ENCODE measurements at regions of chr22 and their contacts with region 1.

Region 1: DNA sequence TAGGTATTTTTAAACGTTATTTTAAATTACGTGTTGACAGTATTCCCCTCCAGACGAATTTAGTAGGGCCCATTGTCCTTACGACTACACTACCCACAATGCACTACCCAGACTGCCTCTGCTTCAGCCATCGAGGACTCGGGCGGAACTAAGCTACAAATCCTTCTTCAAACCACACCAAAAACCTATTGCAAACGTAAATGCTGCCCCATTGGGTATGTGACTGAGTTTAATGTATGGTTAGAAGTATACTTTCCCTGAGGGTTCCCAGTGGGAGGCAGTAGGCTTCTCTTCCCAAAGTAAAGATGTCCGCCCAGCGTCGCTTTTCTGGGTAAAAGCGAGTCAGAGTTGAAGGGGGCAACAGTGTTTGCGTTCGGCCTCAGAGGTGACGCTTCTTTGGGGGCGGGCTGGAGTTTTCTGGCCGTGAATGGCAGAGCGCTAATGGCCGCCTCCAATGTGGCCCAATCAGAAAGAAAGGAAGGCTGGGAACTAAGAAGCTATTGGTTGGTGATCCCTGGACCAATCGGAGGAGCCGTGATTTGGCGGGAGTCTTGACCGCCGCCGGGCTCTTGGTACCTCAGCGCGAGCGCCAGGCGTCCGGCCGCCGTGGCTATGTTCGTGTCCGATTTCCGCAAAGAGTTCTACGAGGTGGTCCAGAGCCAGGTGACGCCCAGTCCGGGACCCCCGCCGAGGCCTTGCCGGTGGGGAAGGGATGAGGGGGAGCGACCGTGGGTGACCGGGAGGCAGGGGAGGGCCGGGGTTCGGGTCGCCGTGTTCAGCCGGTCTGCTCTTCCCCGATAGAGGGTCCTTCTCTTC is at the start of gene CDC45:
- DNase-seq: peak; percentile 98
- H3K4me3 Mint-ChIP-seq: peak within 1 kb of the TSS; percentile 99
- H3K27ac Mint-ChIP-seq: peak within 1 kb of the TSS; percentile 96
- H3K4me1 Mint-ChIP-seq: peaks cover 28% of the 10 kb centered on the region
- H3K27me3 Mint-ChIP-seq: no peaks in the 10 kb centered on the region
- total RNA-seq, gene CDC45: 86.3 to 91.7 TPM

Region 2: GRCh38 chr22:19122143-19122751 is 357.3 kb before region 1 on chr22 and contains the start of gene DGCR2:
- CTCF ChIA-PET with region 1: no interaction called
- intact Hi-C with region 1: loop called (anchors 5 kb)
- DNase-seq: peak; percentile 98
- H3K4me3 Mint-ChIP-seq: peak within 1 kb of the TSS; percentile 84
- H3K27ac Mint-ChIP-seq: peak within 1 kb of the TSS; percentile 66
- H3K4me1 Mint-ChIP-seq: peaks cover 47% of the 10 kb centered on the region
- H3K27me3 Mint-ChIP-seq: no peaks in the 10 kb centered on the region
- total RNA-seq, gene DGCR2: 15.4 to 16.4 TPM

Region 3: GRCh38 chr22:19178656-19179496 is 300.7 kb before region 1 on chr22 and contains the start of gene SLC25A1:
- CTCF ChIA-PET with region 1: interaction called, 4 read pairs
- intact Hi-C with region 1: loop called (anchors 1 kb)
- DNase-seq: peak; percentile 85
- H3K4me3 Mint-ChIP-seq: peak within 1 kb of the TSS; percentile 75
- H3K27ac Mint-ChIP-seq: peak within 1 kb of the TSS; percentile 53
- H3K4me1 Mint-ChIP-seq: peaks cover 31% of the 10 kb centered on the region
- H3K27me3 Mint-ChIP-seq: no peaks in the 10 kb centered on the region
- total RNA-seq, gene SLC25A1: 54.0 to 58.4 TPM

Region 4: DNA sequence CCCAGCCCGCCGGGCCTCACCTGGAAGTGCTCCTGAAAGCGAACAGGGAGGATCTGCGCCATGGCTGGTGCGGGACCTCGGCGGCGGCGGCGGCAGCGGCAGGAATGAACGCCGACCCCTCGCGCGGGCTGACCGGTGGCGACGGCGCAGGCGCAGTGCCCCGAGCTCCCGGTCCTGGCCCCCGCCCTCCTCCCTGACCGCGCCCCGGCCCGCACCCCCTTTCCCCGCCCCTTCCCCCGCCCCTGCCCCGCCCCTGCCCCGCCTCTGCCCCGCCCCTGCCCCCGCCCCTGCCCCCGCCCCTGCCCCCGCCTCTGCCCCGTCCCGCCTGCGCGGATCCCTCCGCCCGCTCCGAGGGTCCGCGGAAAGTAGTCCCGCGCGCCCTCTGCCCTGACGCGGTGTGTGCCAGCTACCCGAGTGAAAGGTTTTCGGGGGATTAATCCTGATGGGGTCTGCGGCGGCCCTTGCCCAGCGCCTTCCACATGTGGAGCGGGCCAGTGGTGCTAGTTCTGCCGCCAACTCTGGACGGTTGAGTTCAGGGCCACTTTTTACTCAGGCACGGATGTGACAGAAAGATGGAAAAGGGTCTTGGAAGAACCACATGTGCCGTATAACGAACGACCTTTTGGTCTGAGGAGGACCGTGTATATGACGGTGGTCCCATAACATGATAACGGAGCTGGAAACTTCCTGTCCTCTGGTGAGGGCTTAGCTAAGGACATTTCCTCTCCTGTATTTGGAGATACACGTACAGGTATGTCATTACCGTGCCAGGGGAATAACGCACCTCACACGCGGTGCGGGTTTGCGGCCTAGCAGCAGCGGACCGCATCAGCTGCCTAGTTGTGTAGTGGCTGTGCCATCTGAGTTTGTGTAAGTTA is 187.7 kb before region 1 on chr22 and contains the start of gene CLTCL1:
- CTCF ChIA-PET with region 1: no interaction called
- intact Hi-C with region 1: loop called (anchors 1 kb)
- DNase-seq: peak; percentile 69
- H3K4me3 Mint-ChIP-seq: peak within 1 kb of the TSS; percentile 87
- H3K27ac Mint-ChIP-seq: peak within 1 kb of the TSS; percentile 73
- H3K4me1 Mint-ChIP-seq: peaks cover 13% of the 10 kb centered on the region
- H3K27me3 Mint-ChIP-seq: peaks cover 15% of the 10 kb centered on the region
- total RNA-seq, gene CLTCL1: 0.57 to 1.0 TPM

Region 5: DNA sequence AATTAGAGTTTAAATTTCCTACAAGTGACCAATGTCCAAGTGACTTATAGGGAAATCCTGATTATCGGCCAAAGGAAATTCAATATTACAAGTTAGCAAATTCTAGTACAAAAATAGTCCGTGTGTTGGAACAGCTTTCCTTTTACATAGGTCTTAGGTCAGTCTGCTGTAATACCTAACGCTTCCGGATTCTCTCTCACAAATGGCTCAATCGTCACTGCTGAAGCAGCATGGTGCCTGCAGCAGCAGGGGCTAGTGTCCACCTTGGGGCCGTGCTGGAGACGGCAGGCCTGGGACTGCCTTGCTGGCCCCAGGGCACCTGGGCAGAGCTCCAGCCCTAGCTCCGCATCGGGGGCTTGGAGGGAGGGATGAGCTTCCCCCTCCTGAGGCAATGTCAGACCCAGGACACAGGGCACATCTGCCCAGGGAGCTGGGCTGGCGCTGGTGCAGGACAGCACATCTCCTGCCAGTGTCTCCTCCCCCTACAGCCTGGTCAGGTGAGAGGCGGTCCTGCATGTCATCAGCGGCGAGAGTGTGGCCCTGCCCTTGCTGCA is 148.6 kb before region 1 on chr22:
- CTCF ChIA-PET with region 1: no interaction called
- intact Hi-C with region 1: no loop called
- DNase-seq: no peak
- H3K4me3 Mint-ChIP-seq: no peak overlapping the region
- H3K27ac Mint-ChIP-seq: no peak overlapping the region
- H3K4me1 Mint-ChIP-seq: no peaks in the 10 kb centered on the region
- H3K27me3 Mint-ChIP-seq: no peaks in the 10 kb centered on the region

Region 6: GRCh38 chr22:19432133-19432851 is 47.3 kb before region 1 on chr22 and contains the start of gene MRPL40:
- CTCF ChIA-PET with region 1: no interaction called
- intact Hi-C with region 1: loop called (anchors 1 kb)
- DNase-seq: peak; percentile 92
- H3K4me3 Mint-ChIP-seq: peak within 1 kb of the TSS; percentile 73
- H3K27ac Mint-ChIP-seq: peak within 1 kb of the TSS; percentile 88
- H3K4me1 Mint-ChIP-seq: peaks cover 44% of the 10 kb centered on the region
- H3K27me3 Mint-ChIP-seq: no peaks in the 10 kb centered on the region
- total RNA-seq, gene MRPL40: 32.6 to 34.9 TPM

Region 7: GRCh38 chr22:19554834-19555404 is 75.4 kb after region 1 on chr22:
- CTCF ChIA-PET with region 1: no interaction called
- intact Hi-C with region 1: no loop called
- DNase-seq: no peak
- H3K4me3 Mint-ChIP-seq: no peak overlapping the region
- H3K27ac Mint-ChIP-seq: no peak overlapping the region
- H3K4me1 Mint-ChIP-seq: no peaks in the 10 kb centered on the region
- H3K27me3 Mint-ChIP-seq: no peaks in the 10 kb centered on the region

Region 8: GRCh38 chr22:19607192-19608002 is 127.8 kb after region 1 on chr22:
- CTCF ChIA-PET with region 1: no interaction called
- intact Hi-C with region 1: loop called (anchors 5 kb)
- DNase-seq: peak; percentile 94
- H3K4me3 Mint-ChIP-seq: peak overlapping the region; percentile 57
- H3K27ac Mint-ChIP-seq: peak overlapping the region; percentile 76
- H3K4me1 Mint-ChIP-seq: peaks cover 62% of the 10 kb centered on the region
- H3K27me3 Mint-ChIP-seq: no peaks in the 10 kb centered on the region

Region 9: DNA sequence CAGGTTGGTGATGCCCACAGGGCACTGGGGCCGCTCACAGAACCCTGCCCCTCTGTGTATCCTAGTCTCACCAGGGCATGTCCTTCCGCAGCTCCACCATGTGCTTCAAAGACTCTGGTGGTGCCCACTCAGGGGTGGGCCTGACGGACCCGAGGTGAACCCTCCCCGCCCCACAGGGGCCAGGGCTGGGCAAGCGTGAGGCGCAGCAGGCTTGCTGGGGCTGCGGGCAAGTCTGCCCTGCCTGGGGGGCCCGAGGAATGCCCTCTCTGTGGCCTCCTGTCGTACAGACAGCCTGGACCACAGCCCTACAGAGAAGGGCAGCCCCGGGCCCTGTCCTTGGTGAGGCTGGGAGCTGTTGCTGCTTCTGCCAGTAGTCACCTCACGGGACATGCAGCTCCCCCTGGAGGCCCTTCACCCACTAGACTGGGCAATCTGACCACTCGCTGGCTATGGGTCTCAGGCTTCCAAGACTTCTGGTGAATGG is 321.2 kb after region 1 on chr22:
- CTCF ChIA-PET with region 1: no interaction called
- intact Hi-C with region 1: no loop called
- DNase-seq: no peak
- H3K4me3 Mint-ChIP-seq: no peak overlapping the region
- H3K27ac Mint-ChIP-seq: no peak overlapping the region
- H3K4me1 Mint-ChIP-seq: no peaks in the 10 kb centered on the region
- H3K27me3 Mint-ChIP-seq: no peaks in the 10 kb centered on the region

Region 10: GRCh38 chr22:19891317-19892256 is 412.0 kb after region 1 on chr22:
- CTCF ChIA-PET with region 1: no interaction called
- intact Hi-C with region 1: loop called (anchors 1 kb)
- DNase-seq: peak; percentile 95
- H3K4me3 Mint-ChIP-seq: peak overlapping the region; percentile 74
- H3K27ac Mint-ChIP-seq: peak overlapping the region; percentile 95
- H3K4me1 Mint-ChIP-seq: peaks cover 80% of the 10 kb centered on the region
- H3K27me3 Mint-ChIP-seq: no peaks in the 10 kb centered on the region

Measured in activated naive CD4-positive, alpha-beta T cell treated with anti-CD3 and anti-CD28 coated beads for 36 hours (primary cell).